Common myeloid progenitor, CD34-positive (primary cell): ENCODE measurements at regions of chr1 and their contacts with region 1.

Region 1: GRCh38 chr1:93814059-93814794 is 64.8 kb downstream of the DNTTIP2 start:
- DNase-seq: peak; percentile 80 to 88 (median 84)
- H3K4me3 ChIP-seq: no peak overlapping the region
- H3K27ac ChIP-seq: no peak overlapping the region
- H3K4me1 ChIP-seq: peaks cover 25 to 51% (median 47%) of the 10 kb centered on the region in 4 experiments
- H3K27me3 ChIP-seq: no peaks in the 10 kb centered on the region

Region 2: GRCh38 chr1:93304716-93305138 is 509.5 kb before region 1 on chr1:
- CTCF ChIA-PET with region 1: interaction called, 13 read pairs
- POLR2A ChIA-PET with region 1: interaction called, 4 read pairs
- DNase-seq: peak; percentile 61 to 84 (median 77)
- H3K4me3 ChIP-seq: no peak overlapping the region
- H3K27ac ChIP-seq: no peak overlapping the region
- H3K4me1 ChIP-seq: no peaks in the 10 kb centered on the region
- H3K27me3 ChIP-seq: no peaks in the 10 kb centered on the region

Region 3: DNA sequence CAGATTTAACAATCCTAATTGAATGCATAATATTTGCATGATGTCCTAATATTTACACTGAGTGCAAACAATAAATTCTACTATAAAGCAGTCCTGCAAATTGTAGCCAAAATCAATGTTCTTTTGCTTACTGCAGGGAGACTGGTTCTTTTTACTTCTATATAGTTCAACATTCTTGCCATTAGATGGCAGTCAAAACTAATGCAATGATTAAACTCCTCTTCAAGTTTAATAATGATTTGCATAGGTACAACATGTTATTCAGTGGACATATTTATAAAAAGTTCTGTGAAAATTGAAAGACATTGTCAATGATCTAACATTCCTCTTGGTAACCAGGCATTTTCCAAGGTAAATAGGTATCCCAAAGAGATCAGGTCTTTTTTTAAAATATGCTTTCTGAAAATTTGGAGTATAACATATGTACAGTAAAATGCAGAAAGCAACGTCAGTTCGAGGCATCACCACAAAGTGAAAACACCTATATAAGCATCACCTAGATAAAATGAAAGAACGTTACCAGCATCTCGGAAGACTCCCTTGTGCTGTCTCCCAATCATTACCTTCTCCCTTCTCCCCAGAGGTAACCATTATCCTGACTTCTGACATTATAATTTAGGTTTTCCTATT is 376.1 kb before region 1 on chr1:
- CTCF ChIA-PET with region 1: interaction called, 11 read pairs
- POLR2A ChIA-PET with region 1: no interaction called
- DNase-seq: peak; percentile 49 to 81 (median 78)
- H3K4me3 ChIP-seq: no peak overlapping the region
- H3K27ac ChIP-seq: no peak overlapping the region
- H3K4me1 ChIP-seq: no peaks in the 10 kb centered on the region
- H3K27me3 ChIP-seq: peaks cover 0 to 3% (median 0%) of the 10 kb centered on the region in 5 experiments

Region 4: DNA sequence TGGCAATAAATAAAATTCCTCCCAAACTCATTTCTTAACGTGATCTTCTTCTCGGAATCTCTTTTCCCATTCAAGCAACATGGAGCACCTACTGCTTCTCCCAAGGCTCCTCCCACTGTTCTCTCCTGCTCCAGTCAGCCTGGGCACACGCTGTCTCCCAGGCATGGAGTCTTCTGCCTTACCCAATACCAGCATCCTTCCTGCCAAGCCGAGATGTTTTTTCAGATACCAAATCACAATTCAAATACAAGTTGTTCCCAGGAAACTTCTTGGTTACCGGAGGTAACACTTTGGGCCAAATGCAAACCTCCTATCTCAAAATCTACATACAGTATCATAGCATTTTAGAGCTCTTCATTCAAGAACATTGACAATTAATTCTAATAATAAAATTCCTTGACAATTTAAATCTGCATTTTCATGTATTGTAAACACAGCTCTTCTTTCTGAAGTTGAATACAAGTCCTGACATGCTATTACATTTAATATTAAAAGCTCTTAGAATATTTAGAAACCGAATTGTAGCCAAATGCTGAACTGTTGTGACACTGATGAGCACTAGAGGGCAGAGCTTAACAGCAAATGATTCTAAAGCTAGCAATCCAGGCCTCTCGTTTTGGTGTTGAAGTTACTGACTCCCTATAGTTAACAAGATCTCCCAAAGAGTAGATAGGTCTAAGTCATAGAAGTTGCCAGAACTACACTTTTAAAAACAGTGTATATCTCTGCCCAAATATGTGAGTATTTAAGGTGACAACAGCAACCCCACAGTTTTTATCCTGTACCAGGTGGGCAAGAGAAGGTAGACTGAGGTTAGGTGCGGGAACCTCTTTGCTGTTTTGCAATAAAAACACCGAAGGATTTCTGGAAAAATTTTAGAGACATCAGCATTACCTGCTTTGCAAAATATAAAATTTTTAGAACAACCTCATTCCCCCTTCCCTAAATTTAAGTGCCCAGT is 184.8 kb before region 1 on chr1:
- CTCF ChIA-PET with region 1: interaction called, 256 read pairs
- POLR2A ChIA-PET with region 1: no interaction called
- DNase-seq: peak; percentile 76 to 88 (median 82)
- H3K4me3 ChIP-seq: no peak overlapping the region
- H3K27ac ChIP-seq: no peak overlapping the region
- H3K4me1 ChIP-seq: no peaks in the 10 kb centered on the region
- H3K27me3 ChIP-seq: no peaks in the 10 kb centered on the region

Region 5: DNA sequence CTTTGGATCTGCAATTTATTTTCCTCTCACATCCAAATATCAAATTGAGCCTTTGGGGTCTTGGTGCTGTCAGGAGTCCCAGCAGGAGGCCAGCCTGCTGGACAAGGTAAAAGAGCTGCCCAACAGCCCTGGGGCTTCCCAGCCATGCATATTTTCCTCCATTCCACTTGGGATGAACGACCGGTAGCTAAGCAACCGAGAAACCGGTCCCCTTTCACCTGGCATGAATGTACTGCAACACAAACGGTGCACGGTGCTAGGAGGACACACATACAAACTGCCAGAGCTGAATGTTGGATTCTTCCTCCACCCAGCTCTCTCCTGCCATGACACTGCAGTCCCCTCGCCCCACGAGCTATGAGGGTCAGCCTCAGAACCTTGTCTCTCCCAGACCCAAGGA is 175.2 kb before region 1 on chr1:
- CTCF ChIA-PET with region 1: interaction called, 256 read pairs
- POLR2A ChIA-PET with region 1: no interaction called
- DNase-seq: no peak
- H3K4me3 ChIP-seq: no peak overlapping the region
- H3K27ac ChIP-seq: no peak overlapping the region
- H3K4me1 ChIP-seq: no peaks in the 10 kb centered on the region
- H3K27me3 ChIP-seq: no peaks in the 10 kb centered on the region

Region 6: GRCh38 chr1:93846211-93846991 is 32.2 kb after region 1 on chr1:
- CTCF ChIA-PET with region 1: interaction called, 197 read pairs
- POLR2A ChIA-PET with region 1: interaction called, 3 read pairs
- DNase-seq: peak; percentile 80 to 90 (median 85)
- H3K4me3 ChIP-seq: peak overlapping the region; percentile 84 to 98 (median 87)
- H3K27ac ChIP-seq: peak overlapping the region; percentile 50 to 83
- H3K4me1 ChIP-seq: peaks cover 8 to 36% (median 24%) of the 10 kb centered on the region in 4 experiments
- H3K27me3 ChIP-seq: no peaks in the 10 kb centered on the region